ENCODE measurements at regions of chr10 and their contacts with region 1.

Region 1: DNA sequence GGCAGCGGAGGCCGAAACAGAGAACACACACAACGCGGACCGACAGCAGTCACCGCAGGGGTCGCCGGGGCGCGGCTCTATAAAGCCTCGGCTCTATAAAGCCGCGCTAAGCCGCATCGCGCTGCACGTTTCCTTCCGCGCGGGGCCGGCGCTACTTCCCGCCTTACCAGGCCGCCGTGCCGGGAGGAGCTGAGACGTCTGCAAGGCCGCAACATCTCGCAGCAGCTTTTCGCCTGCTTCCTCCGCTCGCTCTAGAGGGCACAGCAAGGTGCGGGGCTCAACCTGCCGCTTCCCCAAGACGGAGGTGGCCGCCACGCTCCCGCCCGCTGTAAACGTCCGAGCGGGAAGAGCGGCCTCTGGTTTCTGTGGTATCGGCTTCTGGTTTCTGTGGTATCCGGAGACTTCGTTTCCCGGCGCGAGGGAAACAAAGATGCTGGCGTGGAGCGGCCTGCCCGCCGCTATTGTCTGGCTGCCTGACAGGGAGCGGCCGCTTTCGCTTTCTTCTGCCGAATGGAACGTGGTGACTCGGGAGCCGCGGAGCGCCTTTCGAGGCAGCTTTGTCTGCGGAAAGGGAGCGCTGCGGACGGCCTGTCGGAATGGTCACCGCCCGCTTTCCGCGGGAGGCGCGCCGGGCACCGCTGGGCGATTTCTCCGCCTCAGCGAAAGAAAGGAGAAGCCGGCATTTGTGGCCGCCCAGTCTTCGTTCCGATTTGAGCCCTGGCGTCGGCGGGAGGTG is 91.8 kb downstream of the SPAG6 start:
- DNase-seq: peak; percentile 79 to 93 (median 89)
- ATAC-seq: peak; percentile 91
- H3K4me3 ChIP-seq: peak overlapping the region; percentile 85
- H3K4me3 Mint-ChIP-seq: peak overlapping the region; percentile 90 to 97 (median 96)
- H3K27ac ChIP-seq: peak overlapping the region; percentile 88
- H3K27ac Mint-ChIP-seq: peak overlapping the region; percentile 96 to 98 (median 98)
- H3K4me1 ChIP-seq: peaks cover 10 to 19% of the 10 kb centered on the region in 2 donors
- H3K4me1 Mint-ChIP-seq: peaks cover 12 to 44% (median 35%) of the 10 kb centered on the region in 7 donors
- H3K27me3 ChIP-seq: no peaks in the 10 kb centered on the region
- H3K27me3 Mint-ChIP-seq: peaks cover 0 to 22% (median 0%) of the 10 kb centered on the region in 5 donors

Region 2: DNA sequence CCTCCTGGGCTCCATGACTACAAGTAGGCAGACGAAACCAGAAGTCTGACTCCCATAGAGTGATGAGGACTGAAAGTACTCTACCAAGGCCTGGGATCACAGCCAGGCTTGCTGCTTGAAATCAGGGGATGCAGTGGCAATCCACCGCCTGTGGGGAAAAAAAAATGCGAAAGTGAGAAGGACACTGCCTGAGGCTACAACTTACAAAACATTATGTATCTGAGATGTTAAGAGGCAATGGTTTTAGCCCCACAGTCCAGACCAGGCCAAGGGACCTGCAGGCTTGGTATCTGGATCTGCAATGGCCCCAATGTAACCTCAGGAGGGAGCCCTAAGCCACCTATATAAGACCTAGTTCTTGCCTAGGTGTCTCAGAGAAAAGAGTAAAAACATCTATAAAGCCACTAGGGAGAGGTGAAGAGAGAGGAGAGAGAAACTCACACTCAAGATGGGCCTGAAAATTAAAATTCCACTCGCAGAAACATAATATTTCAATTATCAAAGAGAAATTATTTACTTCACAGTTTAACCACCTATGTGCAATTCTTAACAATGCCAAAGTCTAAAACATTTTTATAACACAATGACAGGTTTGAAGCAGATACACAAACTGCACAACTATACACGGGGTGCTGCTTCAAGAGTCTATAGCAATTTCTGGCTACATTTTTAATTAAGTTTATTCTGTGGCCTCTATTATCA is 447.4 kb before region 1 on chr10:
- CTCF ChIA-PET with region 1: no interaction called
- POLR2A ChIA-PET with region 1: interaction called, 4 read pairs
- intact Hi-C with region 1: loop called in 1 of 2 experiments (anchors 1 kb)
- DNase-seq: peak in 7 of 9 donors; percentile 14 to 52 (median 36)
- ATAC-seq: peak; percentile 89
- H3K4me3 ChIP-seq: no peak overlapping the region
- H3K4me3 Mint-ChIP-seq: no peak overlapping the region
- H3K27ac ChIP-seq: no peak overlapping the region
- H3K27ac Mint-ChIP-seq: peak overlapping the region in 2 of 9 donors; percentile 10 to 47
- H3K4me1 ChIP-seq: no peaks in the 10 kb centered on the region
- H3K4me1 Mint-ChIP-seq: peaks cover 0 to 14% (median 5%) of the 10 kb centered on the region in 7 donors
- H3K27me3 ChIP-seq: no peaks in the 10 kb centered on the region
- H3K27me3 Mint-ChIP-seq: no peaks in the 10 kb centered on the region

Region 3: DNA sequence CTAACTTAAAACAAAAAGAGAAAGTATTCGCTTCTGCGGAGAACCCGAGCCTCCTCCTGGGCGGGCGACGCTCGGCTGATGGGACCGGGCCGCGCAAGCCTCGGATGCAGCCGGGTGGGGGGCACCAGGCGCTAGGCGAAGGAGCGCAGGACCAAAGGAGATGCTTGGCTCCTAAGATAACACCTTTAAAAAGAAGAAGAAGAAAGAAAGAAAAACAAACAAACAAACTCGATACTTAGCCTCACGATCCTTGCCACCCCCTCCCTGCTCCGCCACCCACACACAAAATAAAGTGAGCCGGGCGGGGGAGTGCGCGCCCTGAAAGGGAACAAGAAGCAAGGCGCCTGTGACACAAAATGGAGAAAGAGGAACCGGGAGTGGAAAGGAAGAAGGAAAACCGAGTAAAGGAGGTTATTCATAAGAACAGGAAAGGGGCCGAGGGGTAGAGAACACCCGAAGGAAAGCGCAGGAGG is 185.3 kb before region 1 on chr10:
- CTCF ChIA-PET with region 1: no interaction called
- POLR2A ChIA-PET with region 1: interaction called, 33 read pairs
- intact Hi-C with region 1: loop called (anchors 1 to 2 kb)
- DNase-seq: peak in 8 of 9 donors; percentile 48 to 76 (median 73)
- ATAC-seq: peak; percentile 73
- H3K4me3 ChIP-seq: peak overlapping the region; percentile 82
- H3K4me3 Mint-ChIP-seq: peak overlapping the region; percentile 90 to 100 (median 94)
- H3K27ac ChIP-seq: peak overlapping the region; percentile 87
- H3K27ac Mint-ChIP-seq: peak overlapping the region; percentile 95 to 100 (median 99)
- H3K4me1 ChIP-seq: peaks cover 0 to 4% of the 10 kb centered on the region in 2 donors
- H3K4me1 Mint-ChIP-seq: peaks cover 8 to 40% (median 38%) of the 10 kb centered on the region in 7 donors
- H3K27me3 ChIP-seq: no peaks in the 10 kb centered on the region
- H3K27me3 Mint-ChIP-seq: peaks cover 8 to 31% (median 10%) of the 10 kb centered on the region in 5 donors

Region 4: DNA sequence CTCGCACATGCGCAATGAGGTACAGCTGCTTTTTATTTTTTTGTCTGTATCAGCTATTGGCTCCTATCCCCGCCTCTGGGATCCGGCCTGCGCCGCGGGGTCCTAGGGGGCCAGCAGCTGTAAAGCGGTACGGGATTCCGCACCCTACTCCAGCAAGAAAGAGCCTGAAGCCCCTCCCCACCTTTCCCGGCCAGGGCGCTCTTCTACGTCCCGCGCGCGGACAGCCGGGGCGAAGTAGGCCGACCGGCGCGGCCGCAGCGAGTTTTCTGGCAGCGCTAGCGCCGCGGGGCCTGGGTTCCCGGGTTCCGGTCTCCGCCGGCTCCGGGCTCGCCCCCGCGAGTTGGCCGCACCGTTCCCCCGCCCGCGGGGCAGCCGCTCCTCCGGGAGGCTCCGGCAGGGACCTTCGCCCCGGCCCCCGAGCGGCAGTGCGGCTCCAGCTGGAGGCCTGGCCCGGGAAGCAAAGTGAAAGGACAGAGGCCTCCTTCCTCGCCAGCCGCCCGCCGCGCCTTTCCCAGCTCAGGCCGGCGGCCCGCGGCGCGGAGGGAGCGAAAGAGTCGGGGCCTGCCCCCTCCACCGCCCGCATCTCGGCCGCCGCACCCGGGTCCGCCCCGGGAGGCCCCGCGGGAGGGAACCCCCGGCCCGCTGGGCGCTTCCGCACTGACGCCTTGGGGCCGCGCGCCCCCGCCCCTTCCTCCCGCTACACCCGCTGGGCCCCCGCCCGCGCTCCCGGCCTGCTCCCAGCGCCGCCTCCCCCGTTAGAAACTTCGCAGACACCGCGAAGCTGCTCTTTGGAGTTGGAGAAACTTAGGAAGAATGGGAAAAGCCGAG is 96.5 kb before region 1 on chr10:
- CTCF ChIA-PET with region 1: no interaction called
- POLR2A ChIA-PET with region 1: interaction called, 20 read pairs
- intact Hi-C with region 1: loop called (anchors 1 to 2 kb)
- DNase-seq: peak in 8 of 9 donors; percentile 41 to 80 (median 58)
- ATAC-seq: peak; percentile 59
- H3K4me3 ChIP-seq: peak overlapping the region; percentile 41
- H3K4me3 Mint-ChIP-seq: peak overlapping the region; percentile 80 to 89 (median 86)
- H3K27ac ChIP-seq: peak overlapping the region; percentile 20
- H3K27ac Mint-ChIP-seq: peak overlapping the region; percentile 56 to 93 (median 89)
- H3K4me1 ChIP-seq: peaks cover 24 to 26% of the 10 kb centered on the region in 2 donors
- H3K4me1 Mint-ChIP-seq: peaks cover 0 to 54% (median 18%) of the 10 kb centered on the region in 7 donors
- H3K27me3 ChIP-seq: peaks cover 51 to 91% of the 10 kb centered on the region in 2 donors
- H3K27me3 Mint-ChIP-seq: peaks cover 59 to 79% (median 74%) of the 10 kb centered on the region in 5 donors

Region 5: GRCh38 chr10:22573820-22574569 is 136.9 kb after region 1 on chr10:
- CTCF ChIA-PET with region 1: no interaction called
- POLR2A ChIA-PET with region 1: interaction called, 3 read pairs
- intact Hi-C with region 1: loop called in 1 of 2 experiments (anchors 2 kb)
- DNase-seq: peak in 5 of 9 donors; percentile 16 to 26 (median 24)
- ATAC-seq: peak; percentile 67
- H3K4me3 ChIP-seq: no peak overlapping the region
- H3K4me3 Mint-ChIP-seq: peak overlapping the region in 2 of 10 donors; percentile 24 to 66
- H3K27ac ChIP-seq: no peak overlapping the region
- H3K27ac Mint-ChIP-seq: peak overlapping the region; percentile 8 to 91 (median 62)
- H3K4me1 ChIP-seq: peaks cover 0 to 33% of the 10 kb centered on the region in 2 donors
- H3K4me1 Mint-ChIP-seq: peaks cover 32 to 80% (median 62%) of the 10 kb centered on the region in 7 donors
- H3K27me3 ChIP-seq: no peaks in the 10 kb centered on the region
- H3K27me3 Mint-ChIP-seq: no peaks in the 10 kb centered on the region

Region 6: GRCh38 chr10:22988581-22989360 is 551.7 kb after region 1 on chr10:
- CTCF ChIA-PET with region 1: interaction called, 5 read pairs
- POLR2A ChIA-PET with region 1: interaction called, 3 read pairs
- intact Hi-C with region 1: loop called (anchors 1 to 5 kb)
- DNase-seq: peak; percentile 14 to 83 (median 77)
- ATAC-seq: peak; percentile 94
- H3K4me3 ChIP-seq: no peak overlapping the region
- H3K4me3 Mint-ChIP-seq: peak overlapping the region in 4 of 10 donors; percentile 28 to 35 (median 30)
- H3K27ac ChIP-seq: no peak overlapping the region
- H3K27ac Mint-ChIP-seq: peak overlapping the region in 4 of 9 donors; percentile 17 to 65 (median 54)
- H3K4me1 ChIP-seq: peaks cover 0 to 4% of the 10 kb centered on the region in 2 donors
- H3K4me1 Mint-ChIP-seq: peaks cover 0 to 25% (median 18%) of the 10 kb centered on the region in 7 donors
- H3K27me3 ChIP-seq: no peaks in the 10 kb centered on the region
- H3K27me3 Mint-ChIP-seq: peaks cover 0 to 22% (median under 1%) of the 10 kb centered on the region in 5 donors

Measured in naive thymus-derived CD4-positive, alpha-beta T cell (primary cell).